Activated CD4-positive, alpha-beta T cell treated with anti-CD3 and anti-CD28 coated beads for 36 hours (primary cell): ENCODE measurements at regions of chr11 and their contacts with region 1.

Region 1: DNA sequence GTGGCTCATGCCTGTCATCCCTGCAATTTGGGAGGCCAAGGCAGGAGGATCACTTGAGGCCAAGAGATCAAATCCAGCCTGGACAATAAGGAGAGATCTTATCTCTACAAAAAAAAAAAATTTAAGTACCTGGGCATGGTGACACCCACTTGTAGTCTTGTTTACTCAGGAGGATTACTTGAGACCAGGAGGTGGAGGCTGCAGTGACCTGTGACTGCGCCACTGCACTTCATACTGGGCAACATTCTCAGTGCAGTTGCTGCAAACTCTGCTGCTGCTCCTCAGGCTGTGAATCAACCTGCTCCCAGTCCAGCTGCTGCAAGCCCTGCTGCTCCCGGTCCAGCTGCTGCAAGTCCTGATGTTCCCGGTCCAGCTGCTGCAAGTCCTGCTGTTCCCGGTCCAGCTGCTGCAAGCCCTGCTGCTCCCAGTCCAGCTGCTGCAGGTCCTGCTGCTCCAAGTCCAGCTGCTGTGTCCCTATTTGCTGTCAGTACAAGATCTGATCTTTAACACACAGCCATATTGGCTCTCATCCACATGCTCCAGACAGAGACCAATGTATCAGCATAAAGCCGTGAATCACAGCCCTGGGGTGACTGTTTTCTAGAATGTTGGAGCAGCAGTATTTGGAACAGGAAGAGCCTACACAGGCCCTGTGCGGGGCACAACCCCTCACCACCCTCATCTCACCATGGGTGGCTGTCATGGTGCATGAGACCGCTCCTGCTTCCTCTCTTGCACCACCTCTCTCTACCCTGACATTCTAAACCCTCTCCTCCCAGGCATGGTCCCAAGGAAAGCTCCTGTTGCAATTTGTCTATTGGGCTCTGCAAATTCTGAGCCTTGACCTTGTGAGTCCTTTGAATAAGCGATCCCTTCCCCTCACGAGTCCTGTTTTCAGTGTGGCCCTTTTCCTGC is 3.3 kb downstream of the KRTAP5-10 start:
- DNase-seq: no peak
- ATAC-seq: no peak
- H3K4me3 Mint-ChIP-seq: no peak overlapping the region
- H3K27ac Mint-ChIP-seq: no peak overlapping the region
- H3K4me1 Mint-ChIP-seq: no peaks in the 10 kb centered on the region
- H3K27me3 Mint-ChIP-seq: peaks cover 29% of the 10 kb centered on the region

Region 2: GRCh38 chr11:71580057-71581003 is 11.6 kb after region 1 on chr11:
- CTCF ChIA-PET with region 1: interaction called, 3 read pairs
- POLR2A ChIA-PET with region 1: no interaction called
- intact Hi-C with region 1: loop called (anchors 1 kb)
- DNase-seq: peak; percentile 44
- ATAC-seq: no peak
- H3K4me3 Mint-ChIP-seq: no peak overlapping the region
- H3K27ac Mint-ChIP-seq: no peak overlapping the region
- H3K4me1 Mint-ChIP-seq: peaks cover 2% of the 10 kb centered on the region
- H3K27me3 Mint-ChIP-seq: peaks cover 24% of the 10 kb centered on the region